GM12878 (cell line): ENCODE measurements at regions of chr6 and their contacts with region 1.

Region 1: DNA sequence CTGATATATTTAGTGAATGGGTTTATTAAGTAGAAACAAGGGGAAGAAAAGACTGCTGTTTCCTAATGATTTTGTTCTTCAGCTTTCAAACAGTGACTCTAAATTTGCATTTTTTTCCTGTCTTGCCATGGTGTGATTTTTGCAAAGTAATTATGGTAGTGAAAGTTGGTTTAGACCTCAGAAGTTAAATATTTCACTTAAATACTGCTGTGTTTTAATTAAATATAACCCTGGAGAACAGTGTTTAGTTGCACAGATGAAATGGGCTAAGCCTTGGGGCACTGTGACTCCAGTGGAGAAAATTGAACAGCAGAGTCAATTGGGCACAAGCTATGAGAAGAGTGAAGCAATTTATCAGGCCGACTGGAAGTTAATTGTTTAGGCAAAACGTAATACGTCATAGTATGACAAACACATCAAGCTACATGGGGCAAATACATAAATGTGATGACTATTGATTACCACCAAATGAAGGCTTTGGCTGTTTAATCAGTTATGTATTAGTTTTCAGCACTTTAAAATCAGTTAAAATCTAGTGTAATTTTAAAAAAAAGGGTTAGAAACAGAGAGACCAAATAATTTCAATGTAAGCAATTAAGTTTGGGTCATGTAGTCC is 111.2 kb upstream of the MCHR2 start:
- DNase-seq: no peak
- ATAC-seq: peak; percentile 61
- H3K4me3 ChIP-seq: no peak overlapping the region
- H3K27ac ChIP-seq: no peak overlapping the region
- H3K4me1 ChIP-seq: no peaks in the 10 kb centered on the region
- H3K27me3 ChIP-seq: no peaks in the 10 kb centered on the region; a peak in 1 of 4 replicates
- CTCF ChIP-seq: no peak
- EP300 ChIP-seq: peak in 1 of 2 experiments; percentile 23; a peak in 1 of 4 replicates
- POLR2A ChIP-seq: no peak
- RAD21 ChIP-seq: no peak

Region 2: DNA sequence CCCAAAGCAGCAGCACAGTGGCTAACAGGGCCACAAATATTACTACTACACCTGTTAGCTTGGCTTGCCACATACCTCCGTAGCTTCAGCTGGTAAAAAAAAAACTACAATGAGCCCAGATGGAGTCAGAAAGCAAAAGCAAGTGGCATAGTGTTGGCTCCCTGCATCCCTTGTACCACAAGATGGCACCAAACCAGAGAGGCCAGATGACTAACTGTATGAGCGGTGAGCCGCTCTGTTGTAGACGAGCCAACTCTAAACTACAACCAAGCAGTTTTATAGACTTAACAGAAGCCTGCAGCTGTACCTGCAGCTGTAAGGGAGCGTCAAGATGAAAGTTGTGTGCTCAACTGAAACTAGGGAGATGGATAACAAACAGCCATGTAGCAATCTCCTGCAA is 26.7 kb before region 1 on chr6:
- CTCF ChIA-PET with region 1: interaction called, 13 read pairs
- POLR2A ChIA-PET with region 1: no interaction called
- RAD21 ChIA-PET with region 1: interaction called, 4 read pairs
- SMC1A ChIA-PET with region 1: no interaction called
- in situ Hi-C with region 1: no loop called
- intact Hi-C with region 1: no loop called
- DNase-seq: no peak
- ATAC-seq: peak; percentile 76
- H3K4me3 ChIP-seq: no peak overlapping the region
- H3K27ac ChIP-seq: no peak overlapping the region
- H3K4me1 ChIP-seq: no peaks in the 10 kb centered on the region
- H3K27me3 ChIP-seq: no peaks in the 10 kb centered on the region
- CTCF ChIP-seq: 0 out of 6 replicates have a peak, but pooled peaks of 1 of the 3 experiments have one; percentile 22
- EP300 ChIP-seq: no peak
- POLR2A ChIP-seq: no peak
- RAD21 ChIP-seq: no peak

Region 3: DNA sequence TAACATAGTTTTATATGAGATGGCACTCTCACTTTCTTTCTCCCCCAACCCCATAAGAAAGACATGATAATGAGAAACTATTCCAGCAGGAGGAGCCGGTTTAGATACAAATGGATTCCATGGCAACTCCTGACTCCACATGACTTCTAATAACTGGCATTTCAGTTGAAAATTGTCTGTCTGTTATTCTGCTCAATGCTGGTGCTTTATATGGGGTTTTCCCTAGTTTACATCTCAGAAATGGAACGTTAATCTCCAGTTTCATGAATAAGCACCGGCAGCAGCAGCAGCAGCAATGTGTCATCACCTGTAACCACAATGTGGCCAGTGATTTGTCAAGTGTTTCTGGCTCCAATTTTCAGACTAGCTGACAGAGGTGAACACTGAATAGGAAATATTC is 367.4 kb after region 1 on chr6:
- CTCF ChIA-PET with region 1: interaction called, 13 read pairs
- POLR2A ChIA-PET with region 1: no interaction called
- RAD21 ChIA-PET with region 1: interaction called, 3 read pairs
- SMC1A ChIA-PET with region 1: interaction called, 4 read pairs
- in situ Hi-C with region 1: loop called (anchors 5 kb)
- intact Hi-C with region 1: no loop called
- DNase-seq: peak; percentile 42
- ATAC-seq: peak; percentile 86
- H3K4me3 ChIP-seq: no peak overlapping the region
- H3K27ac ChIP-seq: no peak overlapping the region
- H3K4me1 ChIP-seq: peaks cover 16% of the 10 kb centered on the region
- H3K27me3 ChIP-seq: peaks cover 2 to 9% of the 10 kb centered on the region in 2 experiments; a peak in 3 of 4 replicates
- CTCF ChIP-seq: no peak
- EP300 ChIP-seq: peak in 1 of 2 experiments; percentile 77; a peak in 2 of 4 replicates
- POLR2A ChIP-seq: no peak
- RAD21 ChIP-seq: no peak

Region 4: GRCh38 chr6:100657678-100658330 is 552.6 kb after region 1 on chr6:
- CTCF ChIA-PET with region 1: interaction called, 19 read pairs
- POLR2A ChIA-PET with region 1: no interaction called
- RAD21 ChIA-PET with region 1: interaction called, 4 read pairs
- SMC1A ChIA-PET with region 1: interaction called, 6 read pairs
- in situ Hi-C with region 1: loop called (anchors 10 kb)
- intact Hi-C with region 1: loop called (anchors 2 kb)
- DNase-seq: no peak
- ATAC-seq: peak; percentile 66
- H3K4me3 ChIP-seq: no peak overlapping the region
- H3K27ac ChIP-seq: no peak overlapping the region
- H3K4me1 ChIP-seq: no peaks in the 10 kb centered on the region
- H3K27me3 ChIP-seq: no peaks in the 10 kb centered on the region
- CTCF ChIP-seq: peak; percentile 43 to 78 (median 45); a peak in 3 of 6 replicates
- EP300 ChIP-seq: no peak
- POLR2A ChIP-seq: no peak
- RAD21 ChIP-seq: peak; percentile 61

Region 5: GRCh38 chr6:100719883-100720682 is 614.8 kb after region 1 on chr6:
- CTCF ChIA-PET with region 1: interaction called, 6 read pairs
- POLR2A ChIA-PET with region 1: no interaction called
- RAD21 ChIA-PET with region 1: interaction called, 7 read pairs
- SMC1A ChIA-PET with region 1: interaction called, 4 read pairs
- in situ Hi-C with region 1: no loop called
- intact Hi-C with region 1: loop called (anchors 5 kb)
- DNase-seq: no peak
- ATAC-seq: peak; percentile 65
- H3K4me3 ChIP-seq: no peak overlapping the region
- H3K27ac ChIP-seq: no peak overlapping the region
- H3K4me1 ChIP-seq: no peaks in the 10 kb centered on the region
- H3K27me3 ChIP-seq: no peaks in the 10 kb centered on the region
- CTCF ChIP-seq: peak; percentile 43 to 48 (median 46); a peak in 4 of 6 replicates
- EP300 ChIP-seq: no peak
- POLR2A ChIP-seq: no peak
- RAD21 ChIP-seq: peak; percentile 34; the same call in 1 of the 2 replicates